ENCODE measurements at regions of chr1 and their contacts with region 1.

Region 1: GRCh38 chr1:229258031-229258756 is 12.7 kb upstream of the RAB4A start:
- DNase-seq: peak; percentile 19 to 77 (median 65)
- ATAC-seq: peak; percentile 67
- H3K4me3 ChIP-seq: peak overlapping the region; percentile 7
- H3K4me3 Mint-ChIP-seq: peak overlapping the region in 9 of 10 donors; percentile 9 to 76 (median 61)
- H3K27ac ChIP-seq: no peak overlapping the region
- H3K27ac Mint-ChIP-seq: peak overlapping the region; percentile 14 to 88 (median 67)
- H3K4me1 ChIP-seq: peaks cover 24 to 35% of the 10 kb centered on the region in 2 donors
- H3K4me1 Mint-ChIP-seq: peaks cover 21 to 36% (median 30%) of the 10 kb centered on the region in 7 donors
- H3K27me3 ChIP-seq: no peaks in the 10 kb centered on the region
- H3K27me3 Mint-ChIP-seq: peaks cover 0 to 6% (median 0%) of the 10 kb centered on the region in 5 donors

Region 2: GRCh38 chr1:228664399-228664914 is 593.7 kb before region 1 on chr1:
- CTCF ChIA-PET with region 1: interaction called, 104 read pairs
- POLR2A ChIA-PET with region 1: interaction called, 8 read pairs
- intact Hi-C with region 1: loop called (anchors 1 kb)
- DNase-seq: peak; percentile 54 to 83 (median 71)
- ATAC-seq: peak; percentile 73
- H3K4me3 ChIP-seq: no peak overlapping the region
- H3K4me3 Mint-ChIP-seq: no peak overlapping the region
- H3K27ac ChIP-seq: no peak overlapping the region
- H3K27ac Mint-ChIP-seq: no peak overlapping the region
- H3K4me1 ChIP-seq: no peaks in the 10 kb centered on the region
- H3K4me1 Mint-ChIP-seq: peaks cover 0 to 2% (median 0%) of the 10 kb centered on the region in 7 donors
- H3K27me3 ChIP-seq: no peaks in the 10 kb centered on the region
- H3K27me3 Mint-ChIP-seq: peaks cover 0 to 28% (median 11%) of the 10 kb centered on the region in 5 donors

Region 3: GRCh38 chr1:228794173-228794572 is 464.0 kb before region 1 on chr1:
- CTCF ChIA-PET with region 1: interaction called, 6 read pairs
- POLR2A ChIA-PET with region 1: no interaction called
- intact Hi-C with region 1: loop called in 1 of 2 experiments (anchors 1 kb)
- DNase-seq: peak in 7 of 9 donors; percentile 6 to 49 (median 29)
- ATAC-seq: peak; percentile 41
- H3K4me3 ChIP-seq: peak overlapping the region; percentile 22
- H3K4me3 Mint-ChIP-seq: no peak overlapping the region
- H3K27ac ChIP-seq: no peak overlapping the region
- H3K27ac Mint-ChIP-seq: no peak overlapping the region
- H3K4me1 ChIP-seq: peaks cover 48 to 50% of the 10 kb centered on the region in 2 donors
- H3K4me1 Mint-ChIP-seq: peaks cover 16 to 37% (median 25%) of the 10 kb centered on the region in 7 donors
- H3K27me3 ChIP-seq: no peaks in the 10 kb centered on the region
- H3K27me3 Mint-ChIP-seq: no peaks in the 10 kb centered on the region

Region 4: DNA sequence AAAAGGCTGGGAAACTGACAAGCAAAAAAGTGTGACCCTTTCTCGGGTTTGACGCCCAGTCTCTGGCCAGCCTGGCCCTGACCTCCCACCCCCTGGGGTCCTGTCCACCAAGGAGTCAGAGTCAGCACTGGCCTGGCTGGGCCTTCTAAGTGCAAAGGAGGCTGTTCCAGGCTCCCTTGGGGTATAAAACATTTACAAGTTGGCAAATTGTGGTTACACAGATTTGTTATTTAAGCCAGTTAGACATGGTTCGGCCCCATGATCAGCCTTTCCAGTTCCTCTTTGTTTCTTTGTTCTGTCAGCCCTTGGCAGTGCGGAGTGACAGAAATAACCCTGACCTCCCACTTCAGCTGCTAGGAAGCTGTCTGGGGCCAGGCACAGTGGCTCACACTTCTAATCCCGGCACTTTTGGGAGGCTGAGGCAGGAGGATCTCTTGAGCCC is 148.9 kb before region 1 on chr1:
- CTCF ChIA-PET with region 1: no interaction called
- POLR2A ChIA-PET with region 1: no interaction called
- intact Hi-C with region 1: no loop called
- DNase-seq: no peak
- ATAC-seq: no peak
- H3K4me3 ChIP-seq: no peak overlapping the region
- H3K4me3 Mint-ChIP-seq: no peak overlapping the region
- H3K27ac ChIP-seq: no peak overlapping the region
- H3K27ac Mint-ChIP-seq: no peak overlapping the region
- H3K4me1 ChIP-seq: peaks cover 0 to 3% of the 10 kb centered on the region in 2 donors
- H3K4me1 Mint-ChIP-seq: peaks cover 4 to 19% (median 10%) of the 10 kb centered on the region in 7 donors
- H3K27me3 ChIP-seq: no peaks in the 10 kb centered on the region
- H3K27me3 Mint-ChIP-seq: peaks cover 0 to 12% (median 0%) of the 10 kb centered on the region in 5 donors

Region 5: GRCh38 chr1:229227298-229227919 is 30.8 kb before region 1 on chr1:
- CTCF ChIA-PET with region 1: interaction called, 106 read pairs
- POLR2A ChIA-PET with region 1: interaction called, 25 read pairs
- intact Hi-C with region 1: loop called (anchors 1 to 2 kb)
- DNase-seq: peak; percentile 64 to 85 (median 80)
- ATAC-seq: peak; percentile 86
- H3K4me3 ChIP-seq: no peak overlapping the region
- H3K4me3 Mint-ChIP-seq: peak overlapping the region in 5 of 10 donors; percentile 12 to 63 (median 33)
- H3K27ac ChIP-seq: no peak overlapping the region
- H3K27ac Mint-ChIP-seq: peak overlapping the region in 6 of 9 donors; percentile 3 to 75 (median 25)
- H3K4me1 ChIP-seq: peaks cover 0 to 4% of the 10 kb centered on the region in 2 donors
- H3K4me1 Mint-ChIP-seq: peaks cover 4 to 33% (median 22%) of the 10 kb centered on the region in 7 donors
- H3K27me3 ChIP-seq: no peaks in the 10 kb centered on the region
- H3K27me3 Mint-ChIP-seq: peaks cover 0 to 32% (median 5%) of the 10 kb centered on the region in 5 donors

Region 6: DNA sequence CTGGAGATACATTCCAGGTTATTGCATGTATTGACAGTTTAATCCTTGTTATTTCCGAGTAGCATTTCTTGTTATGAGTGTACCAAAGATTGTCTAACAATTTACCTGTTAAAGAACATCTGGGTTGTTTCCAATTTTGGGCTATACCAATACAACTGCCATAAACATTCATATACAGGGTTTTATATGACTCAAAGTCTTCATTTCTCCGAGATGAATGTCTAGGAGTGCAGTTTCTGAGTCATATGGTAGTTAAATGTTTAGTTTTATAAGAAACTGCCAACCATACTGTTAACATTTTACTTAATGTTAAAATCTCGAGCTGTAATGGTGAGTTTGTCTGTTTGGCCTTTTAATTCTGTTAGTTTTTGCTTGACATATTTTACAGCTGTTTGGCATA is 22.7 kb after region 1 on chr1:
- CTCF ChIA-PET with region 1: no interaction called
- POLR2A ChIA-PET with region 1: no interaction called
- intact Hi-C with region 1: no loop called
- DNase-seq: no peak
- ATAC-seq: no peak
- H3K4me3 ChIP-seq: no peak overlapping the region
- H3K4me3 Mint-ChIP-seq: peak overlapping the region in 2 of 10 donors; percentile 15 to 29
- H3K27ac ChIP-seq: no peak overlapping the region
- H3K27ac Mint-ChIP-seq: no peak overlapping the region
- H3K4me1 ChIP-seq: no peaks in the 10 kb centered on the region
- H3K4me1 Mint-ChIP-seq: peaks cover 32 to 58% (median 52%) of the 10 kb centered on the region in 7 donors
- H3K27me3 ChIP-seq: no peaks in the 10 kb centered on the region
- H3K27me3 Mint-ChIP-seq: no peaks in the 10 kb centered on the region

Region 7: DNA sequence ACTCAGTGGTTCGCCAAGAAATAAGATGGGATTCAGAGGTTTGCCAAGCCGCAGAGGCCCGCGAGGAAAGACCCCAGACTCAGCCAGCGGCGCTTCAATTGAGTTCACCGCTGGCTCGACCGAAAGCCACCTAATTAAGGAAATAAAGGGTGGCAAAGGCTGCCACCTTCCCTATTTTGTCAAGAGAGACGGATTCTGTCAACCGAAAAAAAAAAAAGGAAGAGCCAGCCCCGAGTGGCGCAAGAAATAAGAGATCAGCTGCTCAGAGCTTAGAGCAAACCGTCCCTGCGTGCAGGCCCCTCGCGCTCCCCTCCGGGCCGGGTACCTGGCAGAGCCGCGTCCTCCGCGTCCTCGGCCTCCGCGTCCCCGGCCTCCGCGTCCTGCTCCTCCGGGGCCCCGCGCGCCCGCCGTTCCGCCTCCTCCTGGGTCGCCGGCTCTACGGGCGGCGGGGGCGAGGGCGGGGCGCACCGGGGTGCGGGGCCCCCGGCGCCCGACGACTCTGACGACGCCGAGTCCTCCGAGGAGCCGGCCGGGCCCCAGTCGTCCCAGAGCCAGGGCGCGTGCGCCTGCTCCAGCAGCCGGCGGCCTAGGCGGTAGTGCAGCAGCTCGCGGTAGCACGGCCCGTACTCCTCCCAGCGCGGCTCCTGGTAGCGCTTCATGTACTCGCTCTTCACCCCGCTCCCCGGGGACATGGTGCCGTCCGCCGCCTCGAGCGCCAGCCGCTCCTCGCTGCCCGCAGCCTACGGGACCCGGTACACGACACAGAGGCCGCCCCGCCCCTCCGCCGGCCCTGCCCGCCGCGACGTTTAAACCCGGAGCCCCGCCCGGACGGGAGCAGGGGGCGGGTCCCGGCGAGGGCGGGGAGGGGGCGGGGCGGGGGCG is 83.8 kb after region 1 on chr1:
- CTCF ChIA-PET with region 1: interaction called, 3 read pairs
- POLR2A ChIA-PET with region 1: interaction called, 6 read pairs
- intact Hi-C with region 1: loop called (anchors 1 to 5 kb)
- DNase-seq: peak; percentile 78 to 87 (median 84)
- ATAC-seq: peak; percentile 92
- H3K4me3 ChIP-seq: peak overlapping the region; percentile 87
- H3K4me3 Mint-ChIP-seq: peak overlapping the region; percentile 88 to 96 (median 93)
- H3K27ac ChIP-seq: peak overlapping the region; percentile 88
- H3K27ac Mint-ChIP-seq: peak overlapping the region; percentile 72 to 93 (median 89)
- H3K4me1 ChIP-seq: peaks cover 5 to 7% of the 10 kb centered on the region in 2 donors
- H3K4me1 Mint-ChIP-seq: peaks cover 32 to 59% (median 49%) of the 10 kb centered on the region in 7 donors
- H3K27me3 ChIP-seq: no peaks in the 10 kb centered on the region
- H3K27me3 Mint-ChIP-seq: peaks cover 0 to 23% (median 7%) of the 10 kb centered on the region in 5 donors

Region 8: DNA sequence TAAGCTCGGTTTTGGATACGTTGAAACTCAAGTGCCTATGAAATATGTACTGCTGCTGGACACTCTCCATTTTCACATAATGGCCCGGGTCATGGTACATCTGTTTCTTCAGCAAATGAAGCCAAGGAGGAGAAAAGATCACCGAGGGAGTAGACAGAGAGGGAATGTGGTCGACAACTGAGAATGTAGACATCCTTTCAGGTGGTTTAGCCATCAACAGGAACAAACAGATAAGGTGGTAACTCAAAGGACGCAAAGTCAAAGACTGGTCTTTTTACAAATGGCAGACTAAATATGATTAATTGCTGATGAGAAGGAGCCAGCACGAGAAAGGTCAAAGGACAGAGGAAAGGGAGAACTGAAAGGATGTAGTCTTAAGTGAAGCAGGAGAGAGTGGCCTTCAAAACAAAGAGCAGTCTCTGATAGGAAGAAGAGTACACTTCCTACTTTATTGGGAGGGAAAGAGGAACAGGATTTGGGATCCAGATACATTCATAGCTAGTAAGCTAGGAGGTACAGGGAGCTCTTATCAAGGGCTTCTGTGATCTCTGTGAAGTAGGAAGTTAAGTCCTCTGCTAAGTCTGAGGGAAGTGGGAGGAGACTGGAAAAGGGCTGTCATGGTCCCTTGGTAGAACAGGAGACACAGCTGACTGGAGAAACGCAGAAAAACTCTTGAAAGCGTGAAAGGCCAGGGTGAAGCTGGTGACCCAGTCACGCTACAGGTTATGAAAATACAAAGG is 221.6 kb after region 1 on chr1:
- CTCF ChIA-PET with region 1: interaction called, 107 read pairs
- POLR2A ChIA-PET with region 1: interaction called, 4 read pairs
- intact Hi-C with region 1: loop called (anchors 1 kb)
- DNase-seq: no peak
- ATAC-seq: no peak
- H3K4me3 ChIP-seq: no peak overlapping the region
- H3K4me3 Mint-ChIP-seq: no peak overlapping the region
- H3K27ac ChIP-seq: no peak overlapping the region
- H3K27ac Mint-ChIP-seq: peak overlapping the region in 2 of 9 donors; percentile 36 to 43
- H3K4me1 ChIP-seq: no peaks in the 10 kb centered on the region
- H3K4me1 Mint-ChIP-seq: peaks cover 4 to 19% (median 9%) of the 10 kb centered on the region in 7 donors
- H3K27me3 ChIP-seq: no peaks in the 10 kb centered on the region
- H3K27me3 Mint-ChIP-seq: no peaks in the 10 kb centered on the region

Region 9: DNA sequence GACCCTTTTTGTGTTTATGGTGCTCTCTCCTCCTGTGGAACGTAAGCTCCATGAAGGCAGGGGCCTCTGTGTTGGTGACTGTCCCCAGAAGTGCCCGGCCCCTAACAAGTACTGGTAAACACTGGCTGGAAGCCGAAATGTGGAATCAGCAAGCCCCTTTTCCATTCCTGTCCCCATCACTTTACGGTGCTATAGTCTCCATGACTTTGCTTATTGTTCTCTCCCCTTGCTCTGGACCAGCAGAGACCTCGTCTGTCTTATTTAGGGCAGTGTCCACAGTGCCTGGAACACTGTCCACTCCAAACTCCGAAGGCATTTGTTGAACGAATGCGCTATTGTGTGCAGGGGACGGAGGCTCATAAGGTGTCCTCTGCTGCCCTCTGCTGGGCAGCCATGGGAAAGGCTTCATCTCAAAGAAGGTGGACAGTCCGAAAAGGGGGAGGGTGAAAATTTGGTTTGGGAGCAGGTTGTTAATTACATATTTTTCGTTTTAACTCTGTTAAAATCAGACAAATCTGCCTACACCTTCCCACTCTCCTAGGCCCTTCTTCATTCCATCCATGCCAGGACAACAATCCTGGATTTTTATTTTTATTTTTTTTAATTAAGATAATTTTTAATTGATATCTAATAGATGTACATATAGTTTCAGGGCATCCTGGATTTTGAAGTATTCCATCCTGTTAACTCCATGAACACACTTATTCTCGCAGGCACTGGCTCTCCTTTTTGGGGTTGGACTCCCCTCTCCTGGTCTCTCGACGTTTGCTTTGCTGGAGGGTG is 1052.4 kb after region 1 on chr1:
- CTCF ChIA-PET with region 1: interaction called, 4 read pairs
- POLR2A ChIA-PET with region 1: no interaction called
- intact Hi-C with region 1: loop called in 1 of 2 experiments (anchors 2 kb)
- DNase-seq: peak; percentile 25 to 70 (median 54)
- ATAC-seq: peak; percentile 87
- H3K4me3 ChIP-seq: no peak overlapping the region
- H3K4me3 Mint-ChIP-seq: peak overlapping the region in 2 of 10 donors; percentile 6 to 30
- H3K27ac ChIP-seq: no peak overlapping the region
- H3K27ac Mint-ChIP-seq: no peak overlapping the region
- H3K4me1 ChIP-seq: peaks cover 3% of the 10 kb centered on the region in 2 donors
- H3K4me1 Mint-ChIP-seq: peaks cover 4 to 10% (median 4%) of the 10 kb centered on the region in 7 donors
- H3K27me3 ChIP-seq: no peaks in the 10 kb centered on the region
- H3K27me3 Mint-ChIP-seq: peaks cover 5 to 19% (median 10%) of the 10 kb centered on the region in 5 donors